Endothelial cell of umbilical vein (primary cell): ENCODE measurements at regions of chr5 and their contacts with region 1.

Region 1: GRCh38 chr5:97534166-97534565 is 351.1 kb upstream of the RIOK2 start:
- DNase-seq: peak; percentile 75
- H3K4me3 ChIP-seq: no peak overlapping the region
- H3K27ac ChIP-seq: no peak overlapping the region
- H3K4me1 ChIP-seq: peaks cover 3% of the 10 kb centered on the region
- H3K27me3 ChIP-seq: no peaks in the 10 kb centered on the region
- CTCF ChIP-seq: peak; percentile 47 to 68
- POLR2A ChIP-seq: no peak

Region 2: DNA sequence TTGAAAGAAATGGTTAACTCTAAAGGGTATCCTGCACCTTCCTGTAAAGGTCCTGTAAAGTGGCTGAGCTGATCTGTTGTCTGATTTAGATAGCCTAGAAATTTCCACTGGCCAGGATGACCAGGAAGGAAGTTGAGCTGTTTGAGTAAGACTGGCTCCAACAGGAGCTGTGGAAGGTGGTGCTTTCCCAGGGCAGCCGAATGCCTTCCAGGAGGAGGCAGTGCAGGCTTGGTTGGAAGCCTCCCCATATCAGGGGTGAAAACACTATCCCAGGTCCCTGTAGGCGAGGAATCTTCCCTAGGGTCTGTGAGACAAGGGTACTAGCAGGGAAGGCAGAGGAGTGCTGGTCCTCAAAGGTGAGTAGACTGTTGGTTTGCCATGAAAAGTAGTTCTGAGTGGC is 490.1 kb before region 1 on chr5:
- CTCF ChIA-PET with region 1: no interaction called
- POLR2A ChIA-PET with region 1: no interaction called
- dilution Hi-C with region 1: no loop called
- intact Hi-C with region 1: no loop called
- DNase-seq: peak; percentile 66
- H3K4me3 ChIP-seq: no peak overlapping the region
- H3K27ac ChIP-seq: no peak overlapping the region
- H3K4me1 ChIP-seq: peaks cover 5% of the 10 kb centered on the region
- H3K27me3 ChIP-seq: peaks cover 2 to 15% of the 10 kb centered on the region in 2 experiments
- CTCF ChIP-seq: peak; percentile 28 to 55
- POLR2A ChIP-seq: no peak

Region 3: DNA sequence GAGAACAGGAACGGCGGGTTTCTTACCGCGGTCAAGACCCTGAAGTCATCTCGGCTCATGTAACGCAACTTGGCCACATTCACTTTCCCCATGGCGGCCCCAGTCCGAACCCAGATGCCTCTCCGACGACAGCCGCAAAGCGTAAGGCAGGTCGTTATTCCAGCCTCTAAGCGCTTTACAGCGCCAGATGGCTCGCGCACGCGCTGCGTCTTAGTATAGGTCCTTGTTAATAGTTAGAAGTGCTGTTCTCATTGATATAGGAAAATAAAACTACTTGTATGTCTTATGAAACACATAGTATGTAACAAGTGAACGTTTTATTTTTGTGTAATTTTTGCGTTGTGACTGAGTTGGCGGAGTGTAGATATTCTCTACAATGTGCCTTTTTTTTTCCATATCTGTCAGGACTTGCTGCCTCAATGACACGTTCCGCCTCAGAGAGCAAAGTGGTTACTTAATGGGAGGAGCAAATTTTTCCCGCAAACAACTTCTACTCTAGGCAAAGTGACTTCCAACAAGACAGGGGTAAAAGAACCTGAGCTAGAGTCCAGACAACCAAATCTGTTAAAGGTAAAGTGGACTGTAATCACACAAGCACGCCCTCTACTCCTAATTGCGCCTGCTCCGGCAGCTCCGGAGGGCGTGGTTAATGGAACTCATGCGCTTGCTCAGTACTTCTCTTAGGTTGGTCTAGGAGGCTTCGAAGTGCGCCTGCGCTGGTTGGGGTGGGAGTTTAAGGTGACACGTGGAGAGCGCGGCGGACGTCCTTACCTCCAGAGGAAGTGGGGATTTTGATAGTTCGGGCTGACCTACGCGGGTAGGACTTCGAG is 350.9 kb before region 1 on chr5 and contains the start of gene RIOK2:
- CTCF ChIA-PET with region 1: no interaction called
- POLR2A ChIA-PET with region 1: no interaction called
- dilution Hi-C with region 1: no loop called
- intact Hi-C with region 1: loop called (anchors 5 kb)
- DNase-seq: peak; percentile 99
- H3K4me3 ChIP-seq: peak within 1 kb of the TSS; percentile 83 to 97 (median 91)
- H3K27ac ChIP-seq: peak within 1 kb of the TSS; percentile 85
- H3K4me1 ChIP-seq: peaks cover 15% of the 10 kb centered on the region
- H3K27me3 ChIP-seq: no peaks in the 10 kb centered on the region
- CTCF ChIP-seq: no peak
- POLR2A ChIP-seq: peak; percentile 81
- total RNA-seq, gene RIOK2: 17.5 and 25.4 TPM in 2 replicates

Region 4: DNA sequence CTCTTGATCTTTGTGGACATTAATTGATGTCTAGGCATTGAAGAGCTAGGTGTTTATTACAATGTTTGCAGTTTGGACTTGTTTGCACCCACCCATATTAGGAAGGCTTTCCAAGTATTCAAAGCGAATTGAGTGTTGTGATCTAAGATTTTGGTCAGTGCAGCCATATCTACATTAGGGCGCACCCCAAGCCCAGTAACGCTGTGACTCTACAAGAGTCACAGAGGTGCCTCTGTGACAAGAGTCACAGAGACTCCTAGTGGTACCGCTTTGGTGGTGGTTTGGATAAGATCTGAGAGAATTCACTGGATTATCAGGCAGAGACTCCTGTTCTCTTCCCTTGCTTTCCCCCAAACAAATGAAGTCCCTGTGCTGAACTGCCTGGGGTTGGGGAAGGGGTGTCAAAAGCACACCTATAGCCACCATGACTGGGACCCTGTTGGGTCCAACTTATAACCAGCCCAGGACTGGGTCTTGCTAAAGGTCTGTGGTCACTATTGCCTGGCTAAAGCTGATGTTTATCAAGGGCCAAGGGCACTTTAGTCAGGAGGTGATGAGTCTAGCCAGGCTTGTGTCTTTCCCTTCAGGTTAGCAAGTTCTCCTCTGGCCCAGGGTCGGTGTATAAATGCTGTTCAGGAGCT is 237.0 kb before region 1 on chr5:
- CTCF ChIA-PET with region 1: interaction called, 20 read pairs
- POLR2A ChIA-PET with region 1: no interaction called
- dilution Hi-C with region 1: no loop called
- intact Hi-C with region 1: loop called (anchors 5 kb)
- DNase-seq: peak; percentile 43
- H3K4me3 ChIP-seq: no peak overlapping the region
- H3K27ac ChIP-seq: no peak overlapping the region
- H3K4me1 ChIP-seq: no peaks in the 10 kb centered on the region
- H3K27me3 ChIP-seq: no peaks in the 10 kb centered on the region
- CTCF ChIP-seq: peak; percentile 40 to 47
- POLR2A ChIP-seq: no peak

Region 5: GRCh38 chr5:97499605-97500004 is 34.6 kb before region 1 on chr5:
- CTCF ChIA-PET with region 1: interaction called, 12 read pairs
- POLR2A ChIA-PET with region 1: no interaction called
- dilution Hi-C with region 1: no loop called
- intact Hi-C with region 1: no loop called
- DNase-seq: no peak
- H3K4me3 ChIP-seq: no peak overlapping the region
- H3K27ac ChIP-seq: no peak overlapping the region
- H3K4me1 ChIP-seq: no peaks in the 10 kb centered on the region
- H3K27me3 ChIP-seq: no peaks in the 10 kb centered on the region
- CTCF ChIP-seq: no peak
- POLR2A ChIP-seq: no peak

Region 6: GRCh38 chr5:97600486-97600885 is 66.3 kb after region 1 on chr5:
- CTCF ChIA-PET with region 1: interaction called, 11 read pairs
- POLR2A ChIA-PET with region 1: no interaction called
- dilution Hi-C with region 1: no loop called
- intact Hi-C with region 1: no loop called
- DNase-seq: no peak
- H3K4me3 ChIP-seq: no peak overlapping the region
- H3K27ac ChIP-seq: no peak overlapping the region
- H3K4me1 ChIP-seq: peaks cover 2% of the 10 kb centered on the region
- H3K27me3 ChIP-seq: no peaks in the 10 kb centered on the region
- CTCF ChIP-seq: no peak
- POLR2A ChIP-seq: no peak

Region 7: GRCh38 chr5:98173334-98173733 is 639.2 kb after region 1 on chr5:
- CTCF ChIA-PET with region 1: no interaction called
- POLR2A ChIA-PET with region 1: no interaction called
- dilution Hi-C with region 1: no loop called
- intact Hi-C with region 1: loop called (anchors 10 kb)
- DNase-seq: no peak
- H3K4me3 ChIP-seq: no peak overlapping the region
- H3K27ac ChIP-seq: no peak overlapping the region
- H3K4me1 ChIP-seq: no peaks in the 10 kb centered on the region
- H3K27me3 ChIP-seq: no peaks in the 10 kb centered on the region
- CTCF ChIP-seq: no peak
- POLR2A ChIP-seq: no peak

Region 8: GRCh38 chr5:98796197-98796972 is 1262.2 kb after region 1 on chr5:
- CTCF ChIA-PET with region 1: interaction called, 19 read pairs
- POLR2A ChIA-PET with region 1: no interaction called
- dilution Hi-C with region 1: no loop called
- intact Hi-C with region 1: no loop called
- DNase-seq: peak; percentile 74
- H3K4me3 ChIP-seq: no peak overlapping the region
- H3K27ac ChIP-seq: peak overlapping the region; percentile 43
- H3K4me1 ChIP-seq: no peaks in the 10 kb centered on the region
- H3K27me3 ChIP-seq: no peaks in the 10 kb centered on the region
- CTCF ChIP-seq: peak; percentile 68 to 70
- POLR2A ChIP-seq: no peak